ENCODE measurements at regions of chr4 and their contacts with region 1.

Region 1: GRCh38 chr4:145618932-145619638 is at the start of gene MMAA:
- DNase-seq: peak; percentile 88 to 97 (median 92)
- ATAC-seq: peak; percentile 92
- H3K4me3 ChIP-seq: peak within 1 kb of the TSS; percentile 72
- H3K4me3 Mint-ChIP-seq: peak within 1 kb of the TSS; percentile 99
- H3K27ac ChIP-seq: peak within 1 kb of the TSS; percentile 92 to 94
- H3K27ac Mint-ChIP-seq: peak within 1 kb of the TSS; percentile 99
- H3K4me1 ChIP-seq: peaks cover 10% of the 10 kb centered on the region
- H3K4me1 Mint-ChIP-seq: peaks cover 54% of the 10 kb centered on the region
- H3K27me3 ChIP-seq: no peaks in the 10 kb centered on the region
- H3K27me3 Mint-ChIP-seq: peaks cover 6% of the 10 kb centered on the region
- CTCF ChIP-seq: peak; percentile 67
- total RNA-seq, gene MMAA: 7.0 to 7.2 TPM

Region 2: GRCh38 chr4:145097821-145098674 is 521.0 kb before region 1 on chr4 and contains the starts of genes ABCE1 and ANAPC10:
- CTCF ChIA-PET with region 1: no interaction called
- POLR2A ChIA-PET with region 1: interaction called, 11 read pairs
- intact Hi-C with region 1: loop called (anchors 5 to 10 kb)
- DNase-seq: peak; percentile 88 to 100 (median 93)
- ATAC-seq: peak; percentile 89
- H3K4me3 ChIP-seq: peak within 1 kb of the TSS; percentile 93
- H3K4me3 Mint-ChIP-seq: peak within 1 kb of the TSS; percentile 95
- H3K27ac ChIP-seq: peak within 1 kb of the TSS; percentile 76 to 90
- H3K27ac Mint-ChIP-seq: peak within 1 kb of the TSS; percentile 99
- H3K4me1 ChIP-seq: peaks cover 23% of the 10 kb centered on the region
- H3K4me1 Mint-ChIP-seq: peaks cover 48% of the 10 kb centered on the region
- H3K27me3 ChIP-seq: no peaks in the 10 kb centered on the region
- H3K27me3 Mint-ChIP-seq: no peaks in the 10 kb centered on the region
- CTCF ChIP-seq: no peak
- total RNA-seq, gene ABCE1: 50.1 to 50.6 TPM
- total RNA-seq, gene ANAPC10: 25.8 to 27.5 TPM

Region 3: DNA sequence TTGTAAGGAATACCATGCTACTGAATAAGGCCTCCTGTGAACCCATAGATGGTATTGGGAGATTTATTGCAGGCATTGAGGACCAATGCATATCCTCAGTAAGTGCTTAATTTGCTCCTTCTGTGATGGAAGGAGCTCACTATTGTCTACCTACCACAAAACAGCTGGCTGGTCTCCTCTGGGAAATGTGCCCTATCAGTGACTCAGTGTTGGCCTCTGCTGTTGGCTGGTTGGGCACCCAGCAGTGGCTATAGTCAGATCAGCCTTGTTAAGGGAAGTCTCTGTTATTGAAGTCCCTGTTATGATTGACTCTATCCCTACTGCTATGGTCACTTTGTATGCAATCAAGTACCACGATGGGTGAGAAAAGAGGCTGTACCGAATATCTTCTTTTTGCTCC is 411.2 kb before region 1 on chr4:
- CTCF ChIA-PET with region 1: no interaction called
- POLR2A ChIA-PET with region 1: no interaction called
- intact Hi-C with region 1: no loop called
- DNase-seq: no peak
- ATAC-seq: no peak
- H3K4me3 ChIP-seq: no peak overlapping the region
- H3K4me3 Mint-ChIP-seq: no peak overlapping the region
- H3K27ac ChIP-seq: no peak overlapping the region
- H3K27ac Mint-ChIP-seq: no peak overlapping the region
- H3K4me1 ChIP-seq: no peaks in the 10 kb centered on the region
- H3K4me1 Mint-ChIP-seq: no peaks in the 10 kb centered on the region
- H3K27me3 ChIP-seq: no peaks in the 10 kb centered on the region
- H3K27me3 Mint-ChIP-seq: no peaks in the 10 kb centered on the region
- CTCF ChIP-seq: no peak

Region 4: GRCh38 chr4:145234091-145234706 is 384.9 kb before region 1 on chr4:
- CTCF ChIA-PET with region 1: interaction called, 14 read pairs
- POLR2A ChIA-PET with region 1: interaction called, 8 read pairs
- intact Hi-C with region 1: loop called (anchors 1 to 2 kb)
- DNase-seq: peak in 13 of 14 experiments; percentile 8 to 72 (median 32)
- ATAC-seq: peak; percentile 97
- H3K4me3 ChIP-seq: no peak overlapping the region
- H3K4me3 Mint-ChIP-seq: no peak overlapping the region
- H3K27ac ChIP-seq: no peak overlapping the region
- H3K27ac Mint-ChIP-seq: no peak overlapping the region
- H3K4me1 ChIP-seq: no peaks in the 10 kb centered on the region
- H3K4me1 Mint-ChIP-seq: no peaks in the 10 kb centered on the region
- H3K27me3 ChIP-seq: no peaks in the 10 kb centered on the region
- H3K27me3 Mint-ChIP-seq: peaks cover 5% of the 10 kb centered on the region
- CTCF ChIP-seq: peak; percentile 89

Region 5: GRCh38 chr4:145375416-145375815 is 243.7 kb before region 1 on chr4:
- CTCF ChIA-PET with region 1: no interaction called
- POLR2A ChIA-PET with region 1: no interaction called
- intact Hi-C with region 1: no loop called
- DNase-seq: no peak
- ATAC-seq: no peak
- H3K4me3 ChIP-seq: no peak overlapping the region
- H3K4me3 Mint-ChIP-seq: no peak overlapping the region
- H3K27ac ChIP-seq: no peak overlapping the region
- H3K27ac Mint-ChIP-seq: no peak overlapping the region
- H3K4me1 ChIP-seq: no peaks in the 10 kb centered on the region
- H3K4me1 Mint-ChIP-seq: no peaks in the 10 kb centered on the region
- H3K27me3 ChIP-seq: no peaks in the 10 kb centered on the region
- H3K27me3 Mint-ChIP-seq: no peaks in the 10 kb centered on the region
- CTCF ChIP-seq: no peak

Region 6: GRCh38 chr4:145732895-145733880 is 114.1 kb after region 1 on chr4:
- CTCF ChIA-PET with region 1: interaction called, 3 read pairs
- POLR2A ChIA-PET with region 1: interaction called, 3 read pairs
- intact Hi-C with region 1: loop called in 1 of 2 experiments (anchors 2 kb)
- DNase-seq: peak; percentile 60 to 92 (median 78)
- ATAC-seq: peak; percentile 95
- H3K4me3 ChIP-seq: peak overlapping the region; percentile 76
- H3K4me3 Mint-ChIP-seq: peak overlapping the region; percentile 89
- H3K27ac ChIP-seq: peak overlapping the region in 1 of 2 donors; percentile 35
- H3K27ac Mint-ChIP-seq: peak overlapping the region; percentile 58
- H3K4me1 ChIP-seq: peaks cover 14% of the 10 kb centered on the region
- H3K4me1 Mint-ChIP-seq: peaks cover 21% of the 10 kb centered on the region
- H3K27me3 ChIP-seq: no peaks in the 10 kb centered on the region
- H3K27me3 Mint-ChIP-seq: no peaks in the 10 kb centered on the region
- CTCF ChIP-seq: no peak

Region 7: GRCh38 chr4:146175541-146176453 is 556.7 kb after region 1 on chr4 and contains the start of gene LSM6:
- CTCF ChIA-PET with region 1: no interaction called
- POLR2A ChIA-PET with region 1: no interaction called
- intact Hi-C with region 1: loop called in 1 of 2 experiments (anchors 5 kb)
- DNase-seq: peak; percentile 66 to 92 (median 76)
- ATAC-seq: peak; percentile 90
- H3K4me3 ChIP-seq: peak within 1 kb of the TSS; percentile 94
- H3K4me3 Mint-ChIP-seq: peak within 1 kb of the TSS; percentile 92
- H3K27ac ChIP-seq: peak within 1 kb of the TSS; percentile 54 to 71
- H3K27ac Mint-ChIP-seq: peak within 1 kb of the TSS; percentile 99
- H3K4me1 ChIP-seq: peaks cover 21% of the 10 kb centered on the region
- H3K4me1 Mint-ChIP-seq: peaks cover 62% of the 10 kb centered on the region
- H3K27me3 ChIP-seq: no peaks in the 10 kb centered on the region
- H3K27me3 Mint-ChIP-seq: no peaks in the 10 kb centered on the region
- CTCF ChIP-seq: no peak
- total RNA-seq, gene LSM6: 33.8 to 34.2 TPM

Region 8: GRCh38 chr4:147617173-147617840 is 1998.2 kb after region 1 on chr4 and contains the start of gene TMEM184C:
- CTCF ChIA-PET with region 1: no interaction called
- POLR2A ChIA-PET with region 1: no interaction called
- intact Hi-C with region 1: loop called in 1 of 2 experiments (anchors 10 kb)
- DNase-seq: peak; percentile 96 to 99 (median 98)
- ATAC-seq: peak; percentile 95
- H3K4me3 ChIP-seq: peak within 1 kb of the TSS; percentile 78
- H3K4me3 Mint-ChIP-seq: peak within 1 kb of the TSS; percentile 89
- H3K27ac ChIP-seq: peak within 1 kb of the TSS; percentile 80 to 90
- H3K27ac Mint-ChIP-seq: peak within 1 kb of the TSS; percentile 92
- H3K4me1 ChIP-seq: peaks cover 29% of the 10 kb centered on the region
- H3K4me1 Mint-ChIP-seq: peaks cover 38% of the 10 kb centered on the region
- H3K27me3 ChIP-seq: no peaks in the 10 kb centered on the region
- H3K27me3 Mint-ChIP-seq: no peaks in the 10 kb centered on the region
- CTCF ChIP-seq: no peak
- total RNA-seq, gene TMEM184C: 10.0 to 10.1 TPM

Measured in CD4-positive, alpha-beta T cell (primary cell).